ENCODE measurements at regions of chr9 and their contacts with region 1.

Region 1: DNA sequence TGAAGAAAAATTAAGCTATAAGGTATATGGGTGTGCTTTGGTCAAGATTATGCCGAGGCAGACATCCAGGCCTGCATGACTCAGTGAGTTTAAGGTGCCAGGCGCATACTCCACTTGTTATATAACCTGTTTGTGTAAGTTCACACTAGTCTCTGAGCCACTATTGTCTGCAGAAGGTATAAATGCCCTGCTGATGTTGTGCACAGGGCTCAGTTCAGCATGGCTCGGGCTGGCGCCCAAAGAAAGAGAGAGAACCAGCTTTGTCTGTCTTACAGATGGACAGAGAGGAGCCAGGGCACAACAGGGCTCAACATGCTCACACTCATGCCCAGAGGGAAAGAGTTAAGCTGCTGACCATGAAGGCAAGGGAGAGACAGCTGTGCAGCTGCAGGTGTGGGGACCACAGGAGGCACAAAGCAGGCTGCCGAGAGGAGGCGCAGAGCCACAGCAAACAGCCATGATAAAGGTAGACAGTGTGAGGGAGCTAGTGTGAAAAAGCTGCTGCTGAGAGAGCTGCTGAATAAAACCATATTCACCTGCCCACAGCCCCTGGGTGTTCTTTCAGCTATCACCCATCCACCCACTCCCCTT is 1587.6 kb upstream of the C9orf72 start:
- DNase-seq: no peak
- ATAC-seq: no peak
- H3K4me3 ChIP-seq: no peak overlapping the region
- H3K27ac ChIP-seq: no peak overlapping the region
- H3K4me1 ChIP-seq: no peaks in the 10 kb centered on the region
- H3K27me3 ChIP-seq: no peaks in the 10 kb centered on the region
- CTCF ChIP-seq: no peak

Region 2: GRCh38 chr9:29100762-29101161 is 60.1 kb before region 1 on chr9:
- CTCF ChIA-PET with region 1: no interaction called
- POLR2A ChIA-PET with region 1: no interaction called
- in situ Hi-C with region 1: no loop called
- intact Hi-C with region 1: loop called (anchors 10 kb)
- DNase-seq: no peak
- ATAC-seq: no peak
- H3K4me3 ChIP-seq: no peak overlapping the region
- H3K27ac ChIP-seq: no peak overlapping the region
- H3K4me1 ChIP-seq: no peaks in the 10 kb centered on the region
- H3K27me3 ChIP-seq: no peaks in the 10 kb centered on the region
- CTCF ChIP-seq: no peak

Region 3: GRCh38 chr9:29176231-29176630 is 15.4 kb after region 1 on chr9:
- CTCF ChIA-PET with region 1: no interaction called
- POLR2A ChIA-PET with region 1: no interaction called
- in situ Hi-C with region 1: no loop called
- intact Hi-C with region 1: no loop called
- DNase-seq: no peak
- ATAC-seq: no peak
- H3K4me3 ChIP-seq: no peak overlapping the region
- H3K27ac ChIP-seq: no peak overlapping the region
- H3K4me1 ChIP-seq: no peaks in the 10 kb centered on the region
- H3K27me3 ChIP-seq: no peaks in the 10 kb centered on the region
- CTCF ChIP-seq: no peak

Region 4: DNA sequence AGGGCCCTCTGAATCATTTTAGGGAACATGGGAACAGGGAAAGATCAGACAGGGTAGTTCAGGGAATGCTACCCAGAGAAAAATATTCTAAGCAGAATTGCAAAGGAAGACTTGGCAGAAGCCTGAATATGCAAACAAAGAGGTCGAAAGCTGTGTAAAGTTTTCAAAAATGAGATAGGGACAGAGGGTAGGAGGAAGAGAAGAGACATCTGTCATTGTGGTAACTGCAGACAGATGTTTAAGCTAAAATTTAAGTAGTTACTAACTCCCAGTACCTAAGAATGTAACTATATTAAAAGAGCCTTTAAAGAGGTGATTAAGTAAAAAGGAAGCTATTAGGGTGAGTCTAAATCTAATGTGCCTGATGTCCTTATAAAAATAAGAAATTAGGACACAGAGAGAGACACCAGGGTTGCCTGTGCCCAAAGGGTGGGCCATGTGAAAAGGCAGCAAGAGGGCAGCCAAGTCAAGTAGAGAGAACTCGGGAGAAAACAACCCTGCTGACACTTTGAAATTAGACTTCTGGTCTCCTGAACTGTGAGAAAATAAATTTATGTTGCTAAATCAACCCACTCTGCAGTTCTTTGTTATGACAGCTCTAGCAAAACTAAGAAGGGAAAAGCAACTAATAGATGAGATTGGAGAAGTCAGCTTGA is 59.9 kb after region 1 on chr9:
- CTCF ChIA-PET with region 1: no interaction called
- POLR2A ChIA-PET with region 1: no interaction called
- in situ Hi-C with region 1: no loop called
- intact Hi-C with region 1: loop called (anchors 1 kb)
- DNase-seq: no peak
- ATAC-seq: no peak
- H3K4me3 ChIP-seq: no peak overlapping the region
- H3K27ac ChIP-seq: no peak overlapping the region
- H3K4me1 ChIP-seq: no peaks in the 10 kb centered on the region
- H3K27me3 ChIP-seq: peaks cover 6% of the 10 kb centered on the region
- CTCF ChIP-seq: no peak